ENCODE measurements at regions of chr12 and their contacts with region 1.

Region 1: GRCh38 chr12:32437095-32437515 is 37.7 kb downstream of the FGD4 start:
- DNase-seq: peak; percentile 90
- H3K4me3 ChIP-seq: no peak overlapping the region
- H3K27ac ChIP-seq: peak overlapping the region; percentile 87
- H3K4me1 ChIP-seq: peaks cover 54% of the 10 kb centered on the region
- H3K27me3 ChIP-seq: no peaks in the 10 kb centered on the region
- CTCF ChIP-seq: no peak

Region 2: DNA sequence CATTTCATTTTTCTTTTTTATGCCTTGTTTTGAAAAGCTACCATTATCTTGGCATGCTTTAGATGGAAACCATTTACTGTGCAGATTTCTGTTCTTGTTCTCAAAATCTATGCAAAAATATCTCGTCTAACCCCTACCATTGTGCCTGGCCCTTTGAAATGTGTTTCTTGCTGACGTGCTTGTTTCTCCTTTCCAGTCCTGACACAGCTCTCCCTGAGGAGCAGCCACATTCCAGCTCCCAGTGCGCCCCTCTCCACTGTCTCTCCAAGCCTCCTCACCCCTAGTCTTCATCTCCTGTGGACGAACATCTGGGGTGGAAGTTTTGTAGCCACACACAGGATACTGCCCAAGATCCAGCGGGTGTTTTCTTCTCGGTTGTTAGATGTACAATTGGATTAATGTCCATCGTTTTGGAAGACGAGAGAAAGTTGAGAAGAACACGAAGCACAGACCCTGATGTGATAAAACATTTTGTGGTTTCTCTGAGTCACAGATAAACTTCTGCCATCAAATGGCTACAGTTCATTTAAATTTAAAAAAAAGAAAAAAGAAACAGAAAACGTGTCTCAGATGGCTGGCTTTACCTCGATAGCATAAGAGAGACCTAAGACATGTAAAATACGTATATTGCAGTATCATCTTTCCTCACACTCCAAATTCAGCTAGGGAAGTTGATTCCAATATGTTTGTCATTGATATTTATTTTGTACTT is 59.6 kb before region 1 on chr12:
- CTCF ChIA-PET with region 1: no interaction called
- dilution Hi-C with region 1: loop called (anchors 5 kb)
- in situ Hi-C with region 1: no loop called
- intact Hi-C with region 1: no loop called
- DNase-seq: no peak
- H3K4me3 ChIP-seq: no peak overlapping the region
- H3K27ac ChIP-seq: no peak overlapping the region
- H3K4me1 ChIP-seq: no peaks in the 10 kb centered on the region
- H3K27me3 ChIP-seq: no peaks in the 10 kb centered on the region
- CTCF ChIP-seq: no peak

Region 3: GRCh38 chr12:32399337-32400113 is 37.6 kb before region 1 on chr12 and contains the start of gene FGD4:
- CTCF ChIA-PET with region 1: no interaction called
- dilution Hi-C with region 1: no loop called
- in situ Hi-C with region 1: no loop called
- intact Hi-C with region 1: loop called (anchors 1 kb)
- DNase-seq: peak; percentile 95
- H3K4me3 ChIP-seq: peak within 1 kb of the TSS; percentile 72 to 99 (median 93)
- H3K27ac ChIP-seq: peak within 1 kb of the TSS; percentile 90
- H3K4me1 ChIP-seq: peaks cover 21% of the 10 kb centered on the region
- H3K27me3 ChIP-seq: no peaks in the 10 kb centered on the region
- CTCF ChIP-seq: peak; percentile 15 to 58
- total RNA-seq, gene FGD4: 20.8 to 35.3 TPM

Region 4: GRCh38 chr12:32615441-32615840 is 178.3 kb after region 1 on chr12:
- CTCF ChIA-PET with region 1: no interaction called
- dilution Hi-C with region 1: no loop called
- in situ Hi-C with region 1: no loop called
- intact Hi-C with region 1: no loop called
- DNase-seq: no peak
- H3K4me3 ChIP-seq: no peak overlapping the region
- H3K27ac ChIP-seq: no peak overlapping the region
- H3K4me1 ChIP-seq: peaks cover 3% of the 10 kb centered on the region
- H3K27me3 ChIP-seq: no peaks in the 10 kb centered on the region
- CTCF ChIP-seq: no peak

Region 5: GRCh38 chr12:32659908-32660440 is 222.9 kb after region 1 on chr12:
- CTCF ChIA-PET with region 1: no interaction called
- dilution Hi-C with region 1: no loop called
- in situ Hi-C with region 1: no loop called
- intact Hi-C with region 1: loop called (anchors 1 kb)
- DNase-seq: no peak
- H3K4me3 ChIP-seq: no peak overlapping the region
- H3K27ac ChIP-seq: no peak overlapping the region
- H3K4me1 ChIP-seq: no peaks in the 10 kb centered on the region
- H3K27me3 ChIP-seq: no peaks in the 10 kb centered on the region
- CTCF ChIP-seq: no peak

Region 6: GRCh38 chr12:32671930-32672780 is 235.1 kb after region 1 on chr12:
- CTCF ChIA-PET with region 1: no interaction called
- dilution Hi-C with region 1: no loop called
- in situ Hi-C with region 1: no loop called
- intact Hi-C with region 1: loop called (anchors 1 kb)
- DNase-seq: peak; percentile 37
- H3K4me3 ChIP-seq: no peak overlapping the region
- H3K27ac ChIP-seq: no peak overlapping the region
- H3K4me1 ChIP-seq: no peaks in the 10 kb centered on the region
- H3K27me3 ChIP-seq: no peaks in the 10 kb centered on the region
- CTCF ChIP-seq: peak; percentile 53 to 63

Region 7: GRCh38 chr12:32870716-32871115 is 433.6 kb after region 1 on chr12:
- CTCF ChIA-PET with region 1: no interaction called
- dilution Hi-C with region 1: no loop called
- in situ Hi-C with region 1: no loop called
- intact Hi-C with region 1: no loop called
- DNase-seq: no peak
- H3K4me3 ChIP-seq: no peak overlapping the region
- H3K27ac ChIP-seq: no peak overlapping the region
- H3K4me1 ChIP-seq: no peaks in the 10 kb centered on the region
- H3K27me3 ChIP-seq: no peaks in the 10 kb centered on the region
- CTCF ChIP-seq: no peak

Measured in mammary epithelial cell (primary cell).